ENCODE measurements at regions of chr9 and their contacts with region 1.

Region 1: DNA sequence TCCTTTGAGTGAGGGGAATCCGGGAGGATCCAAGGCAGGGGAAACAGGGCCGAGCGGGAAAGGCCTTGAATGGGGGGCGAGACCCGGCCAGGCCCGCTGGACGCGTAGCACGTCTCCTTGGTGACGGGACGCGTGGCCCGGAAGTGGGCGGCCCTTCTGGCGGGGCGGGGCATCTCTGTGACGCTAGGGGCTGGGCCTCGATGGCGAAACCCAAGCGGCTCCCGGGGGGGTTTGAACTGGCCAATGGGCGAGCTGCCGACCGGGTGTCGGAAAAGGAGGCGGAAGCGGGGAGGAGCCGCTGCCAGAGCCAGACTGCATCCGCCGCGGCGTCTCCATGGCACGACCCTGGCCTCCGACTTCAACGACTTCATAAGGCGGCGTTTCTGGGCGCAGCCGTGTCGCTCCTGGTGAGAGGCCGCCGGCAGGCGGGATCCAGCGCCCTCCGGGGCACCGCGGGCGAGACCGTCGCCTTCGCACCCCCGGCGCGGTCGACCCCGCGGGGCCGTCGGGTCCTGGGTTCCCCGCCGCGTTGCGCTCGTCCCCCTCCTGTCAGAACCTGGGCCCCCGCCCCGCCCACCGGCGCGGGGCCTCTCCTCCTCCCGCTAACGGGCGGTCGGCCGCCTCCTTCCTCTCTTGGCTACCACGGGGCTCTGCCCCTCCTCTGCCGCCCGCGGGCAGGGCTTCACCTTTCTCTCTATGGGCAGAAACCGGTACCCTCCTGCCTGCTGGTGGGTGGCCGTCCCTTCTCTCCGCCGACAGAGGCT is at the start of gene ODF2:
- DNase-seq: peak; percentile 95
- H3K4me3 ChIP-seq: peak within 1 kb of the TSS; percentile 50 to 66 (median 55)
- H3K27ac ChIP-seq: peak within 1 kb of the TSS; percentile 64
- H3K4me1 ChIP-seq: peaks cover 7% of the 10 kb centered on the region
- H3K27me3 ChIP-seq: no peaks in the 10 kb centered on the region
- CTCF ChIP-seq: no peak
- POLR2A ChIP-seq: peak; percentile 86
- total RNA-seq, gene ODF2: 49.5 and 50.5 TPM in 2 replicates

Region 2: DNA sequence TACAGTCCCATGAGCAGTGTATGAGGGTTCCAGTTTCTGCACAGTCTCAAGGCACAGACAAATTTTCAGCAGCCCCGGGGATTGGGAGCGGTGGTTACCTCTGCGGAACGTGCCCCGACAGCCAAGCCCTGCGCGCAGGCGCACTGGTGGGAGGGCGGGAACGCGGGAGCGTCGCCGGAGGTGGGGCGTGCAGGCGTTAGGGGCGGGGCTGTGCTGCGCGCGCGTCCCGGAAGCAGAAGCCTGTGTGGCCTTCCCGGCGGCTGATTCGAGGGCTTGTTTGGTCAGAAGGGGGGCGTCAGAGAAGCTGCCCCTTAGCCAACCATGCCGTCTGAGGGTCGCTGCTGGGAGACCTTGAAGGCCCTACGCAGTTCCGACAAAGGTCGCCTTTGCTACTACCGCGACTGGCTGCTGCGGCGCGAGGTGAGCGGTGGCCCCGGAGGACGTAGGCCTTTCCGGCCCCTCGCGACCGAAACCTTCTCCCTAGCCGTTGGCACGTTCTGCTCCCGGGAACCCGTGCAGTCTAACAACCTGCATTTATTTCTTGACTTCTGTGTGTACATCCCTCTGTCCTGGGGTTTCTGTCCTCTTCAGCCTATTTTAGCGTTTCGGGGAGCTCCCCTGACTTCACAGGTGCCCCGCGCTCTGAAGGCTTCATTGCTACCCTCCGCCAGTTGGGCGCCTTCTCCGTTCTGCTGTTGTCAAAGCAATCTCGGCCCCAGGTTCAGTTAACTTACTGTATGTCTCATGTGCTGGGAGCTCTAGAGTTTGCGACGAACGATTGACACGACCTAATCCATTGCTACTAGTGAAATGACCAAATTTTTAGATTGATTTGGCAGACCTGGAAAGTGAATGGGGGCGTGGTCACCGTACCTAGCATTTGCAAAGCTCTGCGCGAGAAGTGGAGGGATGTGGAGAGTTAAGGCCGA is 48.7 kb after region 1 on chr9 and contains the start of gene GLE1:
- CTCF ChIA-PET with region 1: no interaction called
- POLR2A ChIA-PET with region 1: no interaction called
- dilution Hi-C with region 1: no loop called
- intact Hi-C with region 1: loop called (anchors 1 kb)
- DNase-seq: peak; percentile 94
- H3K4me3 ChIP-seq: peak within 1 kb of the TSS; percentile 22 to 80 (median 72)
- H3K27ac ChIP-seq: peak within 1 kb of the TSS; percentile 12
- H3K4me1 ChIP-seq: peaks cover 7% of the 10 kb centered on the region
- H3K27me3 ChIP-seq: no peaks in the 10 kb centered on the region
- CTCF ChIP-seq: no peak
- POLR2A ChIP-seq: peak; percentile 93
- total RNA-seq, gene GLE1: 20.5 and 22.6 TPM in 2 replicates